Activated CD8-positive, alpha-beta T cell treated with anti-CD3 and anti-CD28 coated beads for 36 hours (primary cell): ENCODE measurements at regions of chr1 and their contacts with region 1.

Region 1: DNA sequence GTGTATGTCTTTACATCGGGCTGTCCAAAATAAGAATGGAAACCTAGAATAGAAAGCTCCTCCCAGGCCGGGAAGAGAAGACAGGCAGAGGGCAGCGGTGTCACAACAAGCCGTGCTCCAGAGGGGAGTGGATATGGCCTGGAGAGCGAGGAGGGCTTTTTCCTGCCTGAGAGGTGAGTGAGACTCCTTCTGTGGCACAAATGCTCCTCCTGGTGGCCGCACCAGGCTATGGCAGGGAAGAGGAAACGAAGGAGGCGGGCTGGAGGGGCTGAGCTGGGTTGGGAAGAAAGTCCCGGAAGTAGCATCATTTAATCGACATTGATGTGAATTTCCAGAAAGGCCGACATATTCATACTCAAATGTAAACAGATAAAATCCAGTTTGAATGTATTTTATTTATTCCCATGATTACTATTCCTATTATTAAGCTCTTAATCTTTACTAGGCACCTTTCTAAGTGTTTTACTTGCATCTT is 54.7 kb downstream of the MEF2D start:
- DNase-seq: peak; percentile 87
- ATAC-seq: peak; percentile 93
- H3K4me3 Mint-ChIP-seq: peak overlapping the region; percentile 4
- H3K27ac Mint-ChIP-seq: no peak overlapping the region
- H3K4me1 Mint-ChIP-seq: peaks cover 20% of the 10 kb centered on the region
- H3K27me3 Mint-ChIP-seq: peaks cover 45% of the 10 kb centered on the region
- CTCF ChIP-seq: peak; percentile 99

Region 2: DNA sequence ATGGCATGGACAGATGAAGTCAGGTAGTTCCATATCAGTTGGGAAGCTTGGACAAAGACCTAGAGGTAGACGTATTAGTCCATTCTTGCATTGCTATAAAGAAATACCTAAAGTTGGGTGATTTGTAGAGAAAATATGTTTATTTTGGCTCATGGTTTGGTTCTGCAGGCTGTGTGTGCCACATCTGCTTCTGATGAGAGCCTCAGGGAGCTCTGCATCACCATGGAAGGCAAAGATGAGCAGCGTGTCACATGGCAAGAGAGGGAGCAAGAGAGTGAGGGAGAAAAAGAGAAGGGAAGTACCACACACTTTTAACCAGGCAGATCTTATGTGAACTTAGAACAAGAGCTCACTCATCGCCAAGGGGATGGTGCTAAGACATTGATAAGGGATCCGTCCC is 98.5 kb before region 1 on chr1:
- CTCF ChIA-PET with region 1: interaction called, 19 read pairs
- POLR2A ChIA-PET with region 1: no interaction called
- intact Hi-C with region 1: no loop called
- DNase-seq: no peak
- ATAC-seq: no peak
- H3K4me3 Mint-ChIP-seq: no peak overlapping the region
- H3K27ac Mint-ChIP-seq: no peak overlapping the region
- H3K4me1 Mint-ChIP-seq: no peaks in the 10 kb centered on the region
- H3K27me3 Mint-ChIP-seq: peaks cover 8% of the 10 kb centered on the region
- CTCF ChIP-seq: no peak

Region 3: GRCh38 chr1:156383023-156383422 is 62.8 kb before region 1 on chr1:
- CTCF ChIA-PET with region 1: interaction called, 420 read pairs
- POLR2A ChIA-PET with region 1: interaction called, 10 read pairs
- intact Hi-C with region 1: loop called (anchors 1 kb)
- DNase-seq: peak; percentile 79
- ATAC-seq: peak; percentile 92
- H3K4me3 Mint-ChIP-seq: no peak overlapping the region
- H3K27ac Mint-ChIP-seq: no peak overlapping the region
- H3K4me1 Mint-ChIP-seq: peaks cover 4% of the 10 kb centered on the region
- H3K27me3 Mint-ChIP-seq: peaks cover 14% of the 10 kb centered on the region
- CTCF ChIP-seq: peak; percentile 82

Region 4: GRCh38 chr1:156421062-156421938 is 24.5 kb before region 1 on chr1:
- CTCF ChIA-PET with region 1: interaction called, 57 read pairs
- POLR2A ChIA-PET with region 1: no interaction called
- intact Hi-C with region 1: no loop called
- DNase-seq: peak; percentile 85
- ATAC-seq: peak; percentile 88
- H3K4me3 Mint-ChIP-seq: peak overlapping the region; percentile 72
- H3K27ac Mint-ChIP-seq: no peak overlapping the region
- H3K4me1 Mint-ChIP-seq: peaks cover 18% of the 10 kb centered on the region
- H3K27me3 Mint-ChIP-seq: peaks cover 71% of the 10 kb centered on the region
- CTCF ChIP-seq: no peak

Region 5: GRCh38 chr1:156456622-156457465 is 11.0 kb after region 1 on chr1:
- CTCF ChIA-PET with region 1: interaction called, 30 read pairs
- POLR2A ChIA-PET with region 1: interaction called, 4 read pairs
- intact Hi-C with region 1: no loop called
- DNase-seq: peak; percentile 99
- ATAC-seq: peak; percentile 90
- H3K4me3 Mint-ChIP-seq: peak overlapping the region; percentile 91
- H3K27ac Mint-ChIP-seq: peak overlapping the region; percentile 99
- H3K4me1 Mint-ChIP-seq: peaks cover 19% of the 10 kb centered on the region
- H3K27me3 Mint-ChIP-seq: no peaks in the 10 kb centered on the region
- CTCF ChIP-seq: peak; percentile 1

Region 6: DNA sequence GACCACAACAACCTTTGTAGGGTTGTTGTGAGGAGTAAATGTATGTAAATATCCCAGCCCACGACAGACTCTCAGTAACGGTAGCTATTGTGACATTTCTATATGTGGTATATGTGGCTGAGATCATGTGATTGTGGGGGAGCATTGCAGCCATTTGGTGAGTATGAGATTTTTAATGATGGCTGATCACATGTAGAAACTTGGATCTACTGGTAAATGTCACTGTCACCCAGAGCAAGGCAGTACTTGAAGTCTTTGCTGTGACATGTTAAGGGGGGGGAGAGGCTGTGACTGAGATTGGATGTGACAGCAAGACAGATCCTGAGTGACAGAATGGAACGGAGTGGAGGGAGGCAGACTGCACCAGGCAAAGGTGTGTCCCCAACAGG is 78.6 kb after region 1 on chr1:
- CTCF ChIA-PET with region 1: interaction called, 12 read pairs
- POLR2A ChIA-PET with region 1: no interaction called
- intact Hi-C with region 1: no loop called
- DNase-seq: peak; percentile 70
- ATAC-seq: peak; percentile 93
- H3K4me3 Mint-ChIP-seq: peak overlapping the region; percentile 40
- H3K27ac Mint-ChIP-seq: peak overlapping the region; percentile 75
- H3K4me1 Mint-ChIP-seq: peaks cover 43% of the 10 kb centered on the region
- H3K27me3 Mint-ChIP-seq: no peaks in the 10 kb centered on the region
- CTCF ChIP-seq: no peak

Region 7: GRCh38 chr1:156608036-156608674 is 162.3 kb after region 1 on chr1:
- CTCF ChIA-PET with region 1: interaction called, 24 read pairs
- POLR2A ChIA-PET with region 1: no interaction called
- intact Hi-C with region 1: no loop called
- DNase-seq: peak; percentile 77
- ATAC-seq: peak; percentile 98
- H3K4me3 Mint-ChIP-seq: no peak overlapping the region
- H3K27ac Mint-ChIP-seq: peak overlapping the region; percentile 50
- H3K4me1 Mint-ChIP-seq: peaks cover 8% of the 10 kb centered on the region
- H3K27me3 Mint-ChIP-seq: peaks cover 3% of the 10 kb centered on the region
- CTCF ChIP-seq: peak; percentile 86